ENCODE measurements at regions of chr21 and their contacts with region 1.

Region 1: DNA sequence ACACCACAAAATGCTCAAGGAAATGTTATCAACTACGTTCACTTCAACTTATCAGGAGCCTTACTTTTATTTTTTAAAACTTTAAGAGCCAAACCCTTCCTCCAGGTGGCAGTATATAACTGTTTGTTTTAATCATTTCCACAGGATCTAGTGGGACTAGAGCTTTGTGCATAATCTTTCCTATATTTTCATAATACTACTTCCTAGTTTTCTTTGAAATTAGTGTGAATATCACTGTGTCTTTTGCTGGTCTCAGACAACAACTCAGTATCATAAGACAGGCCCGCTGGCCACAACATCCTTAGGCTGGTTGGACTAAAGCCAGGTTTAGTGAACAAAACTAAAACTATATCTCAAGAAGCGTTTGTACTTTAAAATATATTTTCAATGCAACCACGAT is 145.5 kb downstream of the TIAM1 start:
- H3K4me3 Mint-ChIP-seq: no peak overlapping the region
- H3K27ac Mint-ChIP-seq: peak overlapping the region; percentile 79
- H3K4me1 Mint-ChIP-seq: peaks cover 48% of the 10 kb centered on the region
- H3K27me3 Mint-ChIP-seq: no peaks in the 10 kb centered on the region

Region 2: DNA sequence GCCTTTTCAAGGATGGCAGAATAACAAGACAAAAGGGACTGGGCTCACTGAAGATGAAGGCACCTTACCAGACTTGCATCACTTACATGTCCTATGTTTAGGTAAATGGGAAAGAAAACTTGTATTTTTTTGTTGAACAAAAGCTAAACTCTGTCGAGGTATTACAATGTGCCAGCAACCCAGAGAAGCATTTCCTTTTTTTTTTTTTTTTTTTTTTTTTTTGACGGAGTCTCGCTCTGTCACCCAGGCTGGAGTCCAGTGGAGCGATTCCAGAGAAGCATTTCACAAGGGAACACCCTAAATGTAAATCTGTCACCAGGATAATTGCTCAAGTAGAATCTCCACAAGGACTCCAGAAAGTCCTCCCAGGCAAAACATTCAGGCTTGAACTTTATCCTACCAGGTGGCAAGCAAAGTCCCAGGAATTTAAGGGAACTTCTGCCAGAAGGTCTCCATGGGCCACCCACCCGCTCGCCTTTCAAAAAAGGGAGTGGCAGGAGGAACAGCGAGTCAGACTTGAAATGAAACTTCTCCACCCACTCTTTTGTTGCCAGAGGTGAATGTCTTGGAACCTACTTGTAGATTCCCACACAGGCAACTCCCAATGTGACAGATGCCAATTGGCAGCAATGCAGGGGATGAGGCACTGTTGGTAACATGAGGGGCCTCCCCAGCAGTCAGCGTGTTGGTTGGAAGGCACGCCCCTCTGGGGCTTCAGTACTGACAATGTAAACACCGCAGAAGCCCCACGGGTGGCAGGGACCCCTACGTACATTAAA is 20.4 kb after region 1 on chr21:
- intact Hi-C with region 1: loop called (anchors 1 kb)
- H3K4me3 Mint-ChIP-seq: peak overlapping the region; percentile 69
- H3K27ac Mint-ChIP-seq: peak overlapping the region; percentile 93
- H3K4me1 Mint-ChIP-seq: peaks cover 55% of the 10 kb centered on the region
- H3K27me3 Mint-ChIP-seq: no peaks in the 10 kb centered on the region

Region 3: DNA sequence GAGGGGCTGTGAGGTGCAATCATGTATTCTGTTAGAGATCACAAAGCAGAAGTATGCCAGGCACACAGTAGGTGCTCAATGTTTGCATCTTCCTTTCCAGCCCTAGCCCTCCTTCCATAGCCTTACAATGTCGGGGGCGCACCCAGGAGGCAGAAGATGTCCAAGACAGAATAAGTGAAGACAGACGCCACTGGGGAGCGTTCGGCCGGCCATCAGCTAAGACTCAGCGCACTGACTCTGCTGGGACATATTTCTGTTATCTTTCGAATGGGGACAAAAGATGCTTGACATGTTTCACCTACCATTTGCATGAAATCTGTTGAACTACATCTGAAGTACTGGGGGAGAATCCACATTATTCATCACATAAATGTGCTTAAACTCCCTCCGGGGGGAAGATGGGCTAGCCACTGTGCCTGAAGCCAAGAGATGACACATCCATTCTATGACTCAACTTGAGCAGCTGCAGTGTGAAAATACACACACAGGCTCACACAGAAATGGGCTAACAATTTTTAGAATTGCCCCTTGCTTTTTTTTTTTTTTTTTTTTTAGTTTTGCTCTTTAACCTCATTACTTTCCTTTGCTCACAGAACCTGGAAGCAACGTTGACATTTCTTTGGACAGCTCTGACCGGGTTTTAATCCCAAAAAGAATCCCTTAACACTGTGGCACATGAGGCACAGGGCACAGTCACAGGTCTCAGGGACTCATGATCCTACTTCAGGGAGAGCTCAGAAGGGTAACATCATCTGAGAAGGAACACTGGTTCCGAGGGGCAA is 137.6 kb after region 1 on chr21:
- intact Hi-C with region 1: loop called (anchors 5 kb)
- H3K4me3 Mint-ChIP-seq: no peak overlapping the region
- H3K27ac Mint-ChIP-seq: peak overlapping the region; percentile 37
- H3K4me1 Mint-ChIP-seq: peaks cover 69% of the 10 kb centered on the region
- H3K27me3 Mint-ChIP-seq: no peaks in the 10 kb centered on the region

Region 4: GRCh38 chr21:31580866-31581276 is 382.3 kb after region 1 on chr21:
- intact Hi-C with region 1: loop called (anchors 1 kb)
- H3K4me3 Mint-ChIP-seq: no peak overlapping the region
- H3K27ac Mint-ChIP-seq: no peak overlapping the region
- H3K4me1 Mint-ChIP-seq: peaks cover 13% of the 10 kb centered on the region
- H3K27me3 Mint-ChIP-seq: peaks cover 2% of the 10 kb centered on the region